Astrocyte of the cerebellum (primary cell): ENCODE measurements at regions of chr11 and their contacts with region 1.

Region 1: GRCh38 chr11:1532014-1532586 is 40.0 kb downstream of the DUSP8 start:
- DNase-seq: peak; percentile 63
- H3K4me3 ChIP-seq: no peak overlapping the region
- CTCF ChIP-seq: peak; percentile 6

Region 2: GRCh38 chr11:995752-996420 is 536.2 kb before region 1 on chr11:
- in situ Hi-C with region 1: loop called (anchors 10 kb)
- DNase-seq: no peak
- H3K4me3 ChIP-seq: no peak overlapping the region
- CTCF ChIP-seq: no peak

Region 3: GRCh38 chr11:1469911-1470680 is 62.0 kb before region 1 on chr11:
- in situ Hi-C with region 1: loop called (anchors 5 kb)
- DNase-seq: no peak
- H3K4me3 ChIP-seq: no peak overlapping the region
- CTCF ChIP-seq: no peak

Region 4: DNA sequence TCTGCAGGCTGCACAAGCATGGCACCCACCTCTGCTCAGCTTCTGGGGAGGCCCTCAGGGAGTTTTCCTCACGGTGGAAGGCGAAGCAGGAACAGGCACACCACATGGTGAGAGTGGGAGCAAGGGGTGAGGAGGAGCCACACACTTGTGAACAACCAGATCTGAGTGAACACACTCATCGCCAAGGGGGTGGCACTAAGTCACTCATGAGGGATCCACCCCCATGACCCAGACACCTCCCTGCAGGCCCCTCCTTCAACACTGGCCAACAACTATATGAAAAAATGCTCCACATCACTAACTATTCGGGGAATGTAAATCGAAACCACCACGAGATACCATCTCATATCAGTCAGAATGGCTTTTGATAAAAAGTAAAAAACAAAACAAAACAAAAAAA is 66.7 kb after region 1 on chr11:
- in situ Hi-C with region 1: no loop called
- DNase-seq: no peak
- H3K4me3 ChIP-seq: no peak overlapping the region
- CTCF ChIP-seq: no peak

Region 5: GRCh38 chr11:1639102-1639620 is 107.1 kb after region 1 on chr11:
- in situ Hi-C with region 1: loop called (anchors 10 kb)
- DNase-seq: no peak
- H3K4me3 ChIP-seq: no peak overlapping the region
- CTCF ChIP-seq: no peak